ENCODE measurements at regions of chr1 and their contacts with region 1.

Region 1: DNA sequence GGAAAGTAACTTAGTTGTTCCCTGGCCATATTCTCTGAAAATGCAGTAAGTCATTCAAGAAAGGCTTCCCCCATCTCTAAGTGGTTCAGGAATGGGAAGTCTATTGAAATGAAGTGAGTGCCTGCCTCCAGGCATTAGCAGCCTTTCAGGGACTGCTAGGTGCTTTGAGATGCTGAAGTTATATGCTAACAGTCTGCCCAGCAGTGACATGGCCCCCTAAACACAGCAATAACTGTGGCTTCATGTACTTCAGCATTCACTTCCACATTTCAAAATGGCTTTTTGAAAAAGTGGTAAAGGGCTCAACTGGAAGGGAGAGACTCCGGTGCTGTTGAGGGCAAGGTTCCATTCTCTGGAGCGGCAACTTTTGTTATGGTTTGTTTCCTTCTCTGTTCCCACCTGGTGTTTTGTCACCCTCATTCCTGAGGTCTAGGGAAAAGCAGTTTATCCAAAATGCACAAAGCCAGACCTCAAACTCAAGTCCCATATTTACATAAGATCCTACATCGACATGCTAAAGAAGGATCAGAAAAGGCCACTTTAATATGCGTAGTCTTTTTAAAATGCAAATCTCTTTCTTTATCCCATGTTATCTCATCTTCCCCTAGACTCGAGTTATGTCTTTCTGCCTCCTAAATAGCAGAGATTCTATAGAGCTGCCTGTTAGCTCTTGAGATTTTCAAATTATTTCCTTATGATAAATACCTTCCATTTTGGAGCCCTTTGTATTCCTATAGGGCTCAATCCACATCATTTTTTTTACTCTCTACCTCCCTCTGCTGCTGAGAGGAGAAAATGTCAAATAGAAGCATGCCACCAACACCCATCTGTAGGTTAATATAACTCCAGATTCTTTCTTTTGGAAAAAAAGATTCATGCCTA is 34.2 kb upstream of the LRRC8C start:
- DNase-seq: no peak
- ATAC-seq: no peak

Region 2: DNA sequence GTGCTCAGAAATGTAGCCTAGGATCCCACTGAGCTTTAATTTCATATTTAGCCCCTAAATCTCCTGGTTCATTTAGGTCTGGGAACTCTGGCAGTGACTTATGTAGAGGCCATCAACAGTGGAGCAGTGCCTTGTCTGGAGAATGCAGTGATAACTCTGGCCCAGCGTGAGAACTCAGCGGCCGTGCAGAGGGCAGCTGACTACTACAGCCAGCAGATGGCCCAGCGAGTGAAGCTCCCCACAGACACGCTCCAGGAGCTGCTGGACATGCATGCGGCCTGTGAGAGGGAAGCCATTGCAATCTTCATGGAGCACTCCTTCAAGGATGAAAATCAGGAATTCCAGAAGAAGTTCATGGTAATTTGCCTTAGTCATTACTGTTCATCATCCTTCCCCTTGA is 217.1 kb before region 1 on chr1:
- intact Hi-C with region 1: no loop called
- DNase-seq: no peak
- ATAC-seq: no peak

Region 3: GRCh38 chr1:89483010-89483756 is 115.5 kb before region 1 on chr1:
- intact Hi-C with region 1: loop called (anchors 2 kb)
- DNase-seq: peak; percentile 51
- ATAC-seq: peak; percentile 59

Region 4: GRCh38 chr1:89519779-89520358 is 78.8 kb before region 1 on chr1:
- intact Hi-C with region 1: loop called (anchors 5 kb)
- DNase-seq: no peak
- ATAC-seq: no peak

Region 5: DNA sequence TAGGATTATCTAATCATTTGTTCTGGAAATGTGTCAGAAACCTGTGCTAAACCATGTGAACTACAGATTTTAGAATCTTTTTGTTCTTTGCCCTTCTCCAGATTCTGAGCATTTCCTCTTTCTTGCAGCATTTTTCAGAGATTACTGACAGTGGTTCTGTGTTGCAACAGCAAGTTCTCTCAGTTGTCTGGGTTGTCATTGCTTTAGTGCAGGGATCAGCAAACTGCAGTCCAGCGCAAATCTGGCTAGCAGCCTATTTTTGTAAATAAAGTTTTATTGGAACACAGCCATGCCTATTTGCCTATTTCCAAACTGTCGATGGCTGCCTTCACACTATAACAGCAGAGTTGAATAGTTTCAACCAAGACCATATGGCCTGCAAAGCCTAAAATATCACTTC is 155.8 kb after region 1 on chr1:
- intact Hi-C with region 1: no loop called
- DNase-seq: no peak
- ATAC-seq: peak; percentile 53